ENCODE measurements at regions of chr20 and their contacts with region 1.

Region 1: GRCh38 chr20:11626551-11626950 is 291.1 kb upstream of the BTBD3 start:
- DNase-seq: no peak
- H3K4me3 ChIP-seq: no peak overlapping the region
- H3K4me3 Mint-ChIP-seq: no peak overlapping the region
- H3K27ac ChIP-seq: no peak overlapping the region
- H3K27ac Mint-ChIP-seq: peak overlapping the region in 1 of 7 donors; percentile 61
- H3K4me1 ChIP-seq: no peaks in the 10 kb centered on the region
- H3K4me1 Mint-ChIP-seq: no peaks in the 10 kb centered on the region
- H3K27me3 ChIP-seq: no peaks in the 10 kb centered on the region
- H3K27me3 Mint-ChIP-seq: no peaks in the 10 kb centered on the region

Region 2: GRCh38 chr20:12528591-12529041 is 902.1 kb after region 1 on chr20:
- CTCF ChIA-PET with region 1: no interaction called
- POLR2A ChIA-PET with region 1: no interaction called
- intact Hi-C with region 1: loop called (anchors 10 kb)
- DNase-seq: no peak
- H3K4me3 ChIP-seq: no peak overlapping the region
- H3K4me3 Mint-ChIP-seq: no peak overlapping the region
- H3K27ac ChIP-seq: no peak overlapping the region
- H3K27ac Mint-ChIP-seq: no peak overlapping the region
- H3K4me1 ChIP-seq: no peaks in the 10 kb centered on the region
- H3K4me1 Mint-ChIP-seq: no peaks in the 10 kb centered on the region
- H3K27me3 ChIP-seq: no peaks in the 10 kb centered on the region
- H3K27me3 Mint-ChIP-seq: no peaks in the 10 kb centered on the region

Measured in CD4-positive, alpha-beta memory T cell (primary cell).